PC-3 (cell line): ENCODE measurements at regions of chr5 and their contacts with region 1.

Region 1: DNA sequence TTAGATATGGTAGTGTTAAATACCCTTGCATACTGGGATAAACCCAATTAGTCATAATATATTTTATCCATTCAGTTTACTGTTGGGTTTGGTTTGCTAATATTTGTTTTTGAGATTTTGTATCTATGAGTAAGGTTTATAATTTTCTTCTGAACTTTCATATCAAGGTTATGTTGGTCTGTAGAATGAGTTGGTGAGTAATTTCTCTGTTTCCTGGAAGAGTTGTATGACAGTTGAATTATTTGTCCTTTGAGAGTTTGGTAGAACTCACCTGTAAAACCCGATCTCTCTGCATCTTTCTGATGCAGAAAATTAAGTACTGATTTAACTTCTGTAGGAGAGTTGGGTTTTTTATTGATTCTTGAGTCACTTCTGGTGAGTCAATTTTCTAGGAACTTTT is 20.4 kb downstream of the DDX4 start:
- DNase-seq: peak; percentile 77
- ATAC-seq: peak; percentile 78
- H3K4me3 ChIP-seq: no peak overlapping the region; the same call in 1 of the 2 replicates
- H3K27ac ChIP-seq: peak overlapping the region; percentile 90
- H3K4me1 ChIP-seq: peaks cover 36% of the 10 kb centered on the region
- H3K27me3 ChIP-seq: no peaks in the 10 kb centered on the region
- CTCF ChIP-seq: no peak

Region 2: GRCh38 chr5:54981928-54982327 is 776.3 kb before region 1 on chr5:
- CTCF ChIA-PET with region 1: no interaction called
- POLR2A ChIA-PET with region 1: no interaction called
- intact Hi-C with region 1: no loop called
- DNase-seq: no peak
- ATAC-seq: no peak
- H3K4me3 ChIP-seq: peak overlapping the region; percentile 52
- H3K27ac ChIP-seq: no peak overlapping the region
- H3K4me1 ChIP-seq: peaks cover 5% of the 10 kb centered on the region; the same call in 1 of the 2 replicates
- H3K27me3 ChIP-seq: no peaks in the 10 kb centered on the region
- CTCF ChIP-seq: no peak

Region 3: DNA sequence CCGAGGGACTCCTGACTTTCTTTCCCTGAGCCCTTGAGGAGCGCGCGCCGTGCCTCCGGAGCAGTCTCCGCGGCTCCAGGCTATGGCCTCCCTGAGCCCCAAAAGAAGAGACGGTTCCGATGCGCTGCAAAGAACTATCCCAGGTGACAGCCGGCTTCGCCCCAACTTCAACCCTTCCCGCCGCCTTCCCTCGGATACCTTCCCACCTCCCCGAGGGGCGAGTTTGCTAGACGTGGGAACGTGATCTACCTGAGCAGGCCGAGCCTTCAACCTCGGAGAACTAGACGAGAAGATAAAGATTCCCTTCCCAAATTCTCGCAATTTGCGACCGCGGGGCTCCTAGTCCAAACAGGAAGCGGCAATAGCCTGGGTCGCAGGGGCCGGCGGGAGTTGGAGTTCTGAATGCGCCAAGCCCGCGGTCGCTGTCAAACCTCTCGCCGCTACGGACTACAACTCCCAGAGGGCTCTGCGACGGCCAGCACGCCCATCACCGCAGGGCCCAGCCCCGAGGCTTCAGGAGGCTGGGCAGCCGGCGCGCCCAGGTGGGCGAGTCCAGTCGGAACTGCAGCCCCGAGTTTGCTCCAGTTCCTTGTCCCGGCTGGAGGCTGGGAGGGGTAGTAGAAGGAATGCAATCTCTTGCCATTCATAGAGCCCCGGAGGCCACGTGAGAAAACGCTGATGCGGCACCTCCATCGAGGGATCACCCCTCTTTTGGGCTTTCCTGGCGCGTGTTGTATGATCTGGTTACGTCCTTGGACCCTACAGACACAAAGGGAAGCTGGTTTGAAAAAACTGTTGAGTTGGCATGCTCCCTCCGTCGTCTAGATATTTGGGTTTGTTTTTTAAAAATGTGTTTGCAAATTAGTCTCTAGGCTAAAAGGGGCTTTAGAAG is 46.0 kb before region 1 on chr5 and contains the start of gene SLC38A9:
- CTCF ChIA-PET with region 1: no interaction called
- POLR2A ChIA-PET with region 1: no interaction called
- intact Hi-C with region 1: loop called (anchors 2 kb)
- DNase-seq: peak; percentile 85
- ATAC-seq: peak; percentile 98
- H3K4me3 ChIP-seq: peak within 1 kb of the TSS; percentile 86
- H3K27ac ChIP-seq: no peak within 1 kb of the TSS
- H3K4me1 ChIP-seq: peaks cover 23% of the 10 kb centered on the region
- H3K27me3 ChIP-seq: no peaks in the 10 kb centered on the region
- CTCF ChIP-seq: no peak
- total RNA-seq, gene SLC38A9: 6.5 and 12.9 TPM in 2 replicates

Region 4: DNA sequence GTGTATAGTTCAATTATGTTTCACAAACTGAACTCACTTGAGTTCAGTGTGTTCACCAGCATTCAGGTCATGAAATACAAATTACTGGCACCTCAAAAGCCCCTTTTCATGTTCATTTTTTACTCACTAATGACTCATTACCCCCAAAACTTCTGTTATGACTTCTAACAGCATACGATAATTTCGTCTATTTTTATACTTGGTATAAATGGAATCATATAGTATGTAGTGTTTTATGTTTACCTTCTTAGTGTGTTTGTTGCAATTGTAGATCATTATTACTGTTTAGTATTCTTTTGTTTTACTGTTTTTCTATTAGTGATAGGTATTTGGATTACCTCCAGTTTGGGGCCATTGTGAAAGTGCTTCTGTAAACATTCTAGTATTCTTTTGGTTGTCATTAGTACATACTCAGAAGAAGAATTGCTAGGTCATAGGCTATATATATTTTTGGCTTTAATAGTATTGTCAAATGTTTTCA is 13.0 kb after region 1 on chr5:
- CTCF ChIA-PET with region 1: no interaction called
- POLR2A ChIA-PET with region 1: no interaction called
- intact Hi-C with region 1: no loop called
- DNase-seq: no peak
- ATAC-seq: no peak
- H3K4me3 ChIP-seq: no peak overlapping the region
- H3K27ac ChIP-seq: no peak overlapping the region
- H3K4me1 ChIP-seq: no peaks in the 10 kb centered on the region
- H3K27me3 ChIP-seq: no peaks in the 10 kb centered on the region
- CTCF ChIP-seq: no peak

Region 5: GRCh38 chr5:55850839-55851674 is 92.8 kb after region 1 on chr5 and contains the start of gene IL31RA:
- CTCF ChIA-PET with region 1: no interaction called
- POLR2A ChIA-PET with region 1: no interaction called
- intact Hi-C with region 1: loop called (anchors 10 kb)
- DNase-seq: peak; percentile 74
- ATAC-seq: peak; percentile 93
- H3K4me3 ChIP-seq: peak within 1 kb of the TSS; percentile 69
- H3K27ac ChIP-seq: peak within 1 kb of the TSS; percentile 72
- H3K4me1 ChIP-seq: peaks cover 12% of the 10 kb centered on the region; the same call in 1 of the 2 replicates
- H3K27me3 ChIP-seq: no peaks in the 10 kb centered on the region
- CTCF ChIP-seq: no peak
- total RNA-seq, gene IL31RA: 1.6 and 3.0 TPM in 2 replicates